ENCODE measurements at regions of chr3 and their contacts with region 1.

Region 1: GRCh38 chr3:50611464-50612233 is at the start of gene CISH:
- DNase-seq: peak; percentile 91
- H3K4me3 ChIP-seq: peak within 1 kb of the TSS; percentile 52 to 62
- H3K27ac ChIP-seq: peak within 1 kb of the TSS; percentile 71 to 78
- H3K4me1 ChIP-seq: peaks cover 2% of the 10 kb centered on the region
- H3K27me3 ChIP-seq: no peaks in the 10 kb centered on the region
- CTCF ChIP-seq: peak in 1 of 4 experiments; percentile 39
- POLR2A ChIP-seq: peak; percentile 92
- total RNA-seq, gene CISH: 5.1 to 7.6 TPM

Region 2: GRCh38 chr3:50568947-50569749 is 42.5 kb before region 1 on chr3 and contains the start of gene HEMK1:
- intact Hi-C with region 1: loop called (anchors 1 kb)
- DNase-seq: peak; percentile 97
- H3K4me3 ChIP-seq: peak within 1 kb of the TSS; percentile 66 to 70
- H3K27ac ChIP-seq: peak within 1 kb of the TSS; percentile 78 to 87
- H3K4me1 ChIP-seq: peaks cover 3% of the 10 kb centered on the region
- H3K27me3 ChIP-seq: no peaks in the 10 kb centered on the region
- CTCF ChIP-seq: peak in 1 of 4 experiments; percentile 7
- POLR2A ChIP-seq: peak; percentile 66
- total RNA-seq, gene HEMK1: 8.5 to 17.1 TPM

Region 3: DNA sequence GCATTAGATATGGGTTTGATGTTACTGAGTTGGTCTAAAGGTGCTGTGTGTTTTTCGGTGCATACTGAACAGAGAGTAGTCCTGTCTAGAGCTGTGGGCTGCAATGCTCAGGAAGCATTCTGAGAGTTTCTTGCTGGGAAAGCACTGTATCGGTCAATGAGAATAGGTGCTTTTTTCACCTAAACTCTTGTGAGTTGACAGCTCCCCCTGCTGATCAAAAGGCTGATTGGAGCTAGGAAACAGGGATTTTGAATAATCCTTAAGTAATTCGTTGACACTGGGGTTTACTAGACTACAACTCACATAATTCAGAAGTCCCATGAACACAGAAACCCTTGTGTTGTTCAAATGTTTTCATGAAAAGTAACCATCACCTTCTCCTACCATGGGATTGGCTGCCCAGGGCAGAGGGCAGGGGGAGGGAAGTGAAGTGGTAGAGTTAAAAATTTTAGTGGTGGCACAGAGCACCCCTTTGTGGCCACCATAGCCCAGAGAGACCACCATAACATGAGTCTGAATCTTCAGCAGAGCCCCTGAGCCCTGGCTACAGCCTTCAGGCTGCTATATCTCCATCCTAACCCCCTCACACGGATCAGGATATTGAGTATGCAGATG is 760.4 kb after region 1 on chr3:
- intact Hi-C with region 1: loop called (anchors 2 kb)
- DNase-seq: peak; percentile 56
- H3K4me3 ChIP-seq: no peak overlapping the region
- H3K27ac ChIP-seq: no peak overlapping the region
- H3K4me1 ChIP-seq: no peaks in the 10 kb centered on the region
- H3K27me3 ChIP-seq: no peaks in the 10 kb centered on the region
- CTCF ChIP-seq: peak; percentile 33 to 84 (median 76)
- POLR2A ChIP-seq: no peak

Region 4: GRCh38 chr3:51498876-51499738 is 887.5 kb after region 1 on chr3:
- intact Hi-C with region 1: loop called (anchors 5 kb)
- DNase-seq: peak; percentile 96
- H3K4me3 ChIP-seq: peak overlapping the region; percentile 94 to 95
- H3K27ac ChIP-seq: peak overlapping the region; percentile 98
- H3K4me1 ChIP-seq: peaks cover 5% of the 10 kb centered on the region
- H3K27me3 ChIP-seq: no peaks in the 10 kb centered on the region
- CTCF ChIP-seq: peak in 1 of 4 experiments; percentile 3
- POLR2A ChIP-seq: peak; percentile 63